ENCODE measurements at regions of chr10 and their contacts with region 1.

Region 1: DNA sequence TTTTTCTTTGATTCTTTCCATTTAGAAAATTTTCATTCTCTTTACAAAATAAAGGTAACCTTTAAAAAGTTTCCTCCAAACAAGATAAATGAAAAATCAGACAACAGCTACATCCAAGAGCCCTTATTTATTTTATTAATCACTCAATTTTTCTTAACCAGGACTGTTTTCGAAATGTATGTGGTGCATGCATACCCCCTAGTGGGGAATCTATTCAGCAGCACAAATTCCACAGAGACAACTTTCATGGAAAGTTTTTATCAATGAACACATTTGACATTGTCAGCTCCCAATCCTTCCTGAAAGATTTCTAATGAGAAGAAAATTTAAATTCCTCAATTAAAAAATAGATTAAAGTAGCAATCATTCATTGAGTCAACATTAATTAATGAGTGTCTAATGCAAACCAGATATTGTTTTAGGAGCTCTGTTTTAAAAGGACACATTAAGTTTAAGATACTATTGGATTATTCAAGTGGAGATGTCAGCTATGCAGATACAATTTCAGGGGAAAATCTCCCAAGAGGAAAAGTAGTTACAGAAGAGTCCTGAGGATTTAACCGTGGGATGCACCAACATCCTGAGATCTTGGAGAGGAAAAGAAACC is 5.2 kb upstream of the HTR7 start:
- H3K4me3 Mint-ChIP-seq: no peak overlapping the region
- H3K27ac Mint-ChIP-seq: no peak overlapping the region
- H3K4me1 Mint-ChIP-seq: peaks cover 6% of the 10 kb centered on the region
- H3K27me3 Mint-ChIP-seq: peaks cover 21% of the 10 kb centered on the region

Region 2: DNA sequence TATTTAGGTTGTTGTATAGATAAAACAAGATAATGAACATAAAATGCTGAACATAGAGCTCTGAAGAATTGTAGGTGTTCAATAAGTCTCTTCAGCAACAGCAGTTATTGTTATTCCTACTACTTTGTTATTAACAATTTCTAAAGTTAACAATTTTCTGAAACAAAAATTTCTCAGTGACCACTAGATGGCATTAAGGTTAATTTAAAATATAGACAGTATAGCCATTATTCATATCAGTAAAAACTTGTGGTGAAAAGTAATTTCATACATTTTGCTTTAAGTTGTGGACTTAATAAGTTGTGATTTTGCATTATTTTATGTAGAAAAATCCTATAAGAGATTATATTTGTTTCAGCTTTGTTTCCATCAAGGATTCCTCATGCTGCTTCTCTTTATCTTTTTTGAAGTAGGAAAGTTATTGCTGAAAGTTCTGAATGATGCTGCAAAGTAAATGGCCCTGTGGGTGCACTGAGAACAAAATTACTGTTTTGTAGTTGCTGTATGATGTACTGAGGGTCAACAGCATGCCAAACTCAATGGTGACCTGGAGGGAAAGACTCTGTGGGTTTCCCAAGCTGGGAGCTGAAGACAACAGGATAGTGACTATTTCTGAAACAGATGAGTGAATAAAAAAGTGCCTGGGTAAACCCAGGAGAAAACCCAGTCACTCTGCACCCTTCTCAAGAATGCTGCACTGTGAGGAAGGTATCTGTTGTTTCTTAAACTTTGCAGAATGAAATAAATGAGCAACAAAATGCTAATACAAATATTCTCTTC is 908.0 kb before region 1 on chr10:
- intact Hi-C with region 1: loop called (anchors 10 kb)
- H3K4me3 Mint-ChIP-seq: no peak overlapping the region
- H3K27ac Mint-ChIP-seq: no peak overlapping the region
- H3K4me1 Mint-ChIP-seq: no peaks in the 10 kb centered on the region
- H3K27me3 Mint-ChIP-seq: no peaks in the 10 kb centered on the region

Region 3: DNA sequence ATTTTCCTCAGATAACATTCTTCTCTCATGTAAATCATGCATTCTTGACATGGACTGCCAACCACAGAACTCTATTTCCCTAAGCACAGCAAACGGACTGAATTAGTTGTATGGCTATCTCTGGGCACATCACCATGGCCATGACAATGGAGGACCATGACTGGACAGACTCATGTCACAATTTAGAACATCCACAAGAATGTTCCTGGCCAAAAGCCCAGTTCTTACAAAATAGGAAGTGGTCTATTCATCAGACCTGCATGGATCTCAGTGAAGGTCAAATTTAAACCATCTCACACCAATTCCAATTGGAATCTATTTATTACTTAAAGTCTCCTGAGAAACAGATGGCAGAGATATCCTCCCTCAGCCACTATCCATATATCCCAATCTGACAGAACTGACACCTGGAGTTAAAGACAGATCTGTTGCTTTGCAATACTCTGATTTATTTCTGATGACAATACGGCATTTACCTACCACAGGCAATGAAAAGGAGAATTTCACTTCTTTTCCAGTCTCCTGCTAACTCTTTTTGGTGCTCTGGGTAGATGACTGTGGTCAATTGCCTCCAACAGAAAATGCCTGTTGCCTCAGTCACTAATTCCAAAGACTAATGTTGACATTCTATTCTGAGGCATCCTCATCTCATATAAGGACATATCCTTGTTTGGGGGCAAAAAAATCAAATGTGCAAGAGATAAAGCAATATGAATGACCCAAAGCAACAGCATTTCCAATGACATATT is 260.0 kb before region 1 on chr10:
- intact Hi-C with region 1: no loop called
- H3K4me3 Mint-ChIP-seq: no peak overlapping the region
- H3K27ac Mint-ChIP-seq: no peak overlapping the region
- H3K4me1 Mint-ChIP-seq: no peaks in the 10 kb centered on the region
- H3K27me3 Mint-ChIP-seq: no peaks in the 10 kb centered on the region

Measured in dendritic cell treated with granulocyte-macrophage colony-stimulating factor and Interleukin-4, amounts not matched to agents 40 ng/mL and 50 ng/mL, for 4 days (primary cell).